GM12878 (cell line): ENCODE measurements at regions of chr11 and their contacts with region 1.

Region 1: GRCh38 chr11:9314291-9315036 is at the start of gene TMEM41B:
- DNase-seq: peak; percentile 89
- ATAC-seq: peak; percentile 98
- H3K4me3 ChIP-seq: peak within 1 kb of the TSS; percentile 94
- H3K27ac ChIP-seq: peak within 1 kb of the TSS; percentile 83
- H3K4me1 ChIP-seq: peaks cover 3% of the 10 kb centered on the region; the same call in 1 of the 2 replicates
- H3K27me3 ChIP-seq: no peaks in the 10 kb centered on the region
- CTCF ChIP-seq: no peak
- EP300 ChIP-seq: peak in 1 of 2 experiments; percentile 42; a peak in 1 of 4 replicates
- POLR2A ChIP-seq: peak; percentile 96
- RAD21 ChIP-seq: 0 out of 2 replicates have a peak, but pooled peaks have one; percentile 2
- polyA plus RNA-seq, gene TMEM41B: 8.0 to 11.0 TPM

Region 2: GRCh38 chr11:9210922-9211320 is 103.5 kb before region 1 on chr11:
- CTCF ChIA-PET with region 1: no interaction called
- POLR2A ChIA-PET with region 1: interaction called, 6 read pairs
- RAD21 ChIA-PET with region 1: interaction called, 5 read pairs
- SMC1A ChIA-PET with region 1: interaction called, 4 read pairs
- in situ Hi-C with region 1: no loop called
- intact Hi-C with region 1: loop called (anchors 5 kb)
- DNase-seq: peak; percentile 75
- ATAC-seq: peak; percentile 68
- H3K4me3 ChIP-seq: no peak overlapping the region
- H3K27ac ChIP-seq: peak overlapping the region; percentile 82
- H3K4me1 ChIP-seq: peaks cover 54% of the 10 kb centered on the region
- H3K27me3 ChIP-seq: no peaks in the 10 kb centered on the region
- CTCF ChIP-seq: no peak
- EP300 ChIP-seq: peak; percentile 76 to 78; a peak in 2 of 4 replicates
- POLR2A ChIP-seq: no peak
- RAD21 ChIP-seq: no peak

Region 3: GRCh38 chr11:9265211-9266131 is 49.0 kb before region 1 on chr11 and contains the start of gene DENND5A:
- CTCF ChIA-PET with region 1: interaction called, 3 read pairs
- POLR2A ChIA-PET with region 1: interaction called, 5 read pairs
- RAD21 ChIA-PET with region 1: interaction called, 7 read pairs
- SMC1A ChIA-PET with region 1: interaction called, 17 read pairs
- in situ Hi-C with region 1: no loop called
- intact Hi-C with region 1: loop called (anchors 2 kb)
- DNase-seq: no peak
- ATAC-seq: peak; percentile 63
- H3K4me3 ChIP-seq: peak within 1 kb of the TSS; percentile 83
- H3K27ac ChIP-seq: peak within 1 kb of the TSS; percentile 56
- H3K4me1 ChIP-seq: peaks cover 4% of the 10 kb centered on the region
- H3K27me3 ChIP-seq: 0 out of 4 replicates have a peak, but pooled peaks cover 0 to 4% of the 10 kb centered on the region in 2 experiments
- CTCF ChIP-seq: no peak; a peak in 1 of 6 replicates
- EP300 ChIP-seq: no peak
- POLR2A ChIP-seq: peak; percentile 81
- RAD21 ChIP-seq: peak; percentile 23; the same call in 1 of the 2 replicates
- polyA plus RNA-seq, gene DENND5A: 15.6 to 24.1 TPM

Region 4: GRCh38 chr11:9302448-9302847 is 12.0 kb before region 1 on chr11:
- CTCF ChIA-PET with region 1: interaction called, 6 read pairs
- POLR2A ChIA-PET with region 1: interaction called, 18 read pairs
- RAD21 ChIA-PET with region 1: interaction called, 3 read pairs
- SMC1A ChIA-PET with region 1: interaction called, 12 read pairs
- in situ Hi-C with region 1: no loop called
- intact Hi-C with region 1: no loop called
- DNase-seq: no peak
- ATAC-seq: no peak
- H3K4me3 ChIP-seq: no peak overlapping the region
- H3K27ac ChIP-seq: no peak overlapping the region
- H3K4me1 ChIP-seq: no peaks in the 10 kb centered on the region; the same call in 1 of the 2 replicates
- H3K27me3 ChIP-seq: no peaks in the 10 kb centered on the region
- CTCF ChIP-seq: no peak
- EP300 ChIP-seq: no peak
- POLR2A ChIP-seq: no peak
- RAD21 ChIP-seq: no peak

Region 5: GRCh38 chr11:9384535-9385303 is 70.3 kb after region 1 on chr11 and contains the start of gene IPO7:
- CTCF ChIA-PET with region 1: interaction called, 9 read pairs
- POLR2A ChIA-PET with region 1: interaction called, 7 read pairs
- RAD21 ChIA-PET with region 1: interaction called, 5 read pairs
- SMC1A ChIA-PET with region 1: interaction called, 20 read pairs
- in situ Hi-C with region 1: no loop called
- intact Hi-C with region 1: loop called (anchors 5 kb)
- DNase-seq: peak; percentile 60
- ATAC-seq: peak; percentile 97
- H3K4me3 ChIP-seq: peak within 1 kb of the TSS; percentile 97
- H3K27ac ChIP-seq: peak within 1 kb of the TSS; percentile 91
- H3K4me1 ChIP-seq: peaks cover 3% of the 10 kb centered on the region; the same call in 1 of the 2 replicates
- H3K27me3 ChIP-seq: no peaks in the 10 kb centered on the region
- CTCF ChIP-seq: peak in 2 of 3 experiments; percentile 10 to 13; a peak in 1 of 6 replicates
- EP300 ChIP-seq: 0 out of 4 replicates have a peak, but pooled peaks of 1 of the 2 experiments have one; percentile 20
- POLR2A ChIP-seq: peak; percentile 99
- RAD21 ChIP-seq: no peak
- polyA plus RNA-seq, gene IPO7: 9.2 to 9.9 TPM